Activated naive CD4-positive, alpha-beta T cell treated with anti-CD3 and anti-CD28 coated beads for 36 hours (primary cell): ENCODE measurements at regions of chr4 and their contacts with region 1.

Region 1: DNA sequence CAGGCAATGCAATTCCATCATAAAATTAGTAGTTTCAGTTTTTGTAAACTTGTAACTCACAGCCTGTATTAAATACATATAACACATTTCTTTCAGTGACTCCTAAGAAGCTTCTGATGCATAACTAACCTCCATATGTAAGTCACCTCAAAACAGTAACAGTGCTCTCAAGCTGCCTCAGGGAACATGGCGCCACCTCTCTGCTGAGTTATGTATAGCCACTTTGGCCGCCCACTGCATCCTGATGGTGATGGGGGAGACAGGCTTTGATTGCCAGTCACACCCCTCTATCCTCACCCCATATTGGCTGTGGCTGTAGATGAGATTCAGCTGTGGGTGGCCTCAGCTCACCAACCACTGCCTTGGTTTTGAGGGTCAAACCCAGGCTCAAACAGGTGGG is 54.3 kb downstream of the LRBA start:
- DNase-seq: peak; percentile 68
- H3K4me3 Mint-ChIP-seq: no peak overlapping the region
- H3K27ac Mint-ChIP-seq: no peak overlapping the region
- H3K4me1 Mint-ChIP-seq: peaks cover 57% of the 10 kb centered on the region
- H3K27me3 Mint-ChIP-seq: no peaks in the 10 kb centered on the region

Region 2: DNA sequence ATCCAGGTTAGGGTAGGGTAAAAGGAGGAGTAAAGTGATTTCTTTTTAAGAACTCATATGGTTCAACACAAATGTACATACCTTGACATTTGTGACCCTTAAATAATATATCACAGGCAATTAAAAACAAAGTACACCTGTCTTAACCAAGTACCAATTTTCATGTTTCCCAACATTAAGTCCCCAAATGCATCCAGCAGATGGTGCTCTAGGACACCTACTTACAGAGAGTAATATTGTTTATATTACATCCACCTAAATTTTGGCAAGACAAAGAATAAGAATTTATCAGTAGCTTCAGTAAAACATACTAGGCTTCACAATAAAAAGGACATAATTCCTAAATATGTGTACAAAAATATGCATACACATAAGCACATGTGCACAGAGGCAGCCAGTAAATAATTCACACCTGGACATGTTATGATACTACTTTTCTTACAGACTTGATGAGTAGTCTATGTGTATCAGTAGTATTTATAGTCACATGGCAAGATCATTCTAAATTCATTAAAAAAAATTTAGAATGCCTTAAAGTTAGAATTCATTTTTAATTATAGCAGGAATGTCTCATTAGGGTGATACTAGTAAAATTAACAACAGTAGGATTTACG is 662.9 kb before region 1 on chr4:
- CTCF ChIA-PET with region 1: no interaction called
- intact Hi-C with region 1: loop called (anchors 2 kb)
- DNase-seq: peak; percentile 68
- H3K4me3 Mint-ChIP-seq: no peak overlapping the region
- H3K27ac Mint-ChIP-seq: no peak overlapping the region
- H3K4me1 Mint-ChIP-seq: peaks cover 14% of the 10 kb centered on the region
- H3K27me3 Mint-ChIP-seq: no peaks in the 10 kb centered on the region

Region 3: GRCh38 chr4:150818661-150819060 is 142.2 kb before region 1 on chr4:
- CTCF ChIA-PET with region 1: no interaction called
- intact Hi-C with region 1: loop called (anchors 5 kb)
- DNase-seq: no peak
- H3K4me3 Mint-ChIP-seq: no peak overlapping the region
- H3K27ac Mint-ChIP-seq: no peak overlapping the region
- H3K4me1 Mint-ChIP-seq: peaks cover 13% of the 10 kb centered on the region
- H3K27me3 Mint-ChIP-seq: no peaks in the 10 kb centered on the region

Region 4: DNA sequence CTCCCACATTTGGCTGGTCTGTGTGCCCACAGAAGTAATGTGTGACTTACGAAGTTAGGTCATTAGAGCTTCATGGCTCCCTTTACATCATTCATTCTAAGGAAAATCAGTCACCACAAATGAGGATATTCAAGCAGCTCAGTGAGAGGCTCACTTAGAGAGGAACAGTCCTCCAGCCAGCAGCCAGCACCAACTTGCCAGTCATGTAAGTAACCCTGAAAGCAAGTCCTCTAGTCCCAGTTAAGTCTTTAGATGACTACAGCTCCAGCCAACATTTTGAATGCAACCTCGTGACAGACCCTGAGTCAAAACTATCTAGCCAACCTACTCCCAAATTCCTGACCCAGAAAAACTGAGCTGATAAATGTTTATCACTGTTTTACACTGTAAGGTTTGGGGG is 17.0 kb before region 1 on chr4:
- CTCF ChIA-PET with region 1: interaction called, 3 read pairs
- intact Hi-C with region 1: loop called (anchors 2 kb)
- DNase-seq: no peak
- H3K4me3 Mint-ChIP-seq: no peak overlapping the region
- H3K27ac Mint-ChIP-seq: no peak overlapping the region
- H3K4me1 Mint-ChIP-seq: peaks cover 57% of the 10 kb centered on the region
- H3K27me3 Mint-ChIP-seq: no peaks in the 10 kb centered on the region

Region 5: DNA sequence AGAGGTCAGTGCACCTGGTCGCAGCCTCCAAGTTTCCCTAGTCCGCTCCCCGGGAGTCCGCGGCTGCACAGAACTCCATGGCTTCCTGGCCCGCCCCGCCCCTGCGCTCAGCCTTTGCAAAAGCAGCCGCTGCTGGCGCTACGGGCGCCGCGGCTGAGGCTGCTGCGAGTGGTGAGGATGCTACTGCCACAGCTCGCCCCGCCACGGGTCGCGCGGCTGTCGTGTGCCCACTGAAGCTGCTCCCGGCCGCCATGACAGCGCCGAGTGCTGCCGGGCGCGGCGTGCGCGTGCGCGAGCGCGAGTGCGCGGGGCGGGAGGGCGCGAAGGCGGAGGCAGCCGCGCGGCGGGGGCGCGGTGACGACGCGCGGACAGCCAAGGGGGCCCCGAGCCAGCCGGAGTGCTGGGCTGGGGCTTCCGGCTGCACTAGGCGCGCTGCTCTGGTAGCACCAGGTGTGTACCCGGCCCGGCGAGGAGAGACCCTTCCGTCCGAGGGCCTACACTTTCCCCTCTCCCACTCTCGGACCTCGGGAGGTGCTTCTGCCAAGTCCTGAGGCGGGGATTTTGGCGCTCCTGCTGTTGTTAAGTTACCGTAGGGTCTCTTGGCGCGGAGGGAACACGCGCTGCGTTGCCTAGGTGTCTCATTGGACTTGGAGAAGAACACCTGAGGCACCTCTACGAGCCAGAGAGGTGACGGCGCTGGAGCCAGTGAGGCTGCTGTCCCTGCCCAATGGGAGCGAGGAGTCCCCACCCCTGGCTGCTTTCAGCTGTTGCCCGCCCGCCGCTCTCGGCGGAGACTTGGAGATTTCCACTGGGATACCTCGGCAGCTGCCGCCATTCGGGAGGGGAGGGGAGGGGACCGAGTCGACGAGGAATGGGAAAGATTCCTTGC is 54.9 kb after region 1 on chr4:
- CTCF ChIA-PET with region 1: interaction called, 11 read pairs
- intact Hi-C with region 1: loop called (anchors 2 kb)
- DNase-seq: peak; percentile 71
- H3K4me3 Mint-ChIP-seq: peak overlapping the region; percentile 100
- H3K27ac Mint-ChIP-seq: peak overlapping the region; percentile 99
- H3K4me1 Mint-ChIP-seq: peaks cover 23% of the 10 kb centered on the region
- H3K27me3 Mint-ChIP-seq: no peaks in the 10 kb centered on the region